ENCODE measurements at regions of chr16 and their contacts with region 1.

Region 1: GRCh38 chr16:87416826-87417527 is 24.8 kb downstream of the MAP1LC3B start:
- DNase-seq: peak; percentile 67
- H3K4me3 ChIP-seq: no peak overlapping the region
- H3K27ac ChIP-seq: no peak overlapping the region
- H3K4me1 ChIP-seq: no peaks in the 10 kb centered on the region
- H3K27me3 ChIP-seq: no peaks in the 10 kb centered on the region
- CTCF ChIP-seq: peak; percentile 60 to 77 (median 67)
- POLR2A ChIP-seq: no peak

Region 2: DNA sequence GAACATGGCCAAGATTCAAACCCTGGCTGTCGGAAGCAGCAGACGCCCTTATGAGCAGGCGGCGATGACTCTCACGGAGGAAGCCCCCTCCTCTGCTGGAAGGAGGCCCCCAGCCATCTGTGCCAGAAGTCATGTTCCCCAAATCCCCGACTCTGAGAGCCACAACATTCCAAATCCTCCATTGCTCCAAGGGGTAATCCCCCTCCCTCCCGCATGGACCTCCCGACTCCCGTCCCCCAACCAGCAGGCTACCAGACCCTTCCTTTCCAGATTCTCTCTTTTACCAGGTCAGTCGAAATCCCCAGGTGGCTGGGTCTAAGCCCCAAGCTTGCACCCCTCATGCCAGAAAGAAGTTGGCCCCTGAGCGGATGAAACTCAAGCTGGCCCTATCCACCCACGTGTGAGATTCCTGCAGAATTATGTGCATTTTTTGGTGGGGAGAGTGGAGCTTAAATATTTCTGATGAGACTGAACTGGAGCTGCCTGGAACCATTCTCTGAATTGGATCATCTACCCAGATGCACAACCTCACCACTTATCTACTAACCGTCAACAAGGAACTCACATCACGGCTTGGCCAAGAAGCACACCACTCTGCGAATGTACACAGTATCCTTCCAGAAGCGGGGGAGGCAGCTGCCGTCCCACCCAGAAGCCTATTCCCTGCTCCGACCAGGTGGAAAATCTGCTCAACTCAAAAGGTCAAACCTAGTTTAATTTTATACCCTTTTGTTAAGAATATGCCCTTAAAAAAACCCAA is 383.3 kb before region 1 on chr16:
- intact Hi-C with region 1: no loop called
- DNase-seq: no peak
- H3K4me3 ChIP-seq: no peak overlapping the region
- H3K27ac ChIP-seq: no peak overlapping the region
- H3K4me1 ChIP-seq: no peaks in the 10 kb centered on the region
- H3K27me3 ChIP-seq: no peaks in the 10 kb centered on the region
- CTCF ChIP-seq: no peak
- POLR2A ChIP-seq: no peak

Region 3: DNA sequence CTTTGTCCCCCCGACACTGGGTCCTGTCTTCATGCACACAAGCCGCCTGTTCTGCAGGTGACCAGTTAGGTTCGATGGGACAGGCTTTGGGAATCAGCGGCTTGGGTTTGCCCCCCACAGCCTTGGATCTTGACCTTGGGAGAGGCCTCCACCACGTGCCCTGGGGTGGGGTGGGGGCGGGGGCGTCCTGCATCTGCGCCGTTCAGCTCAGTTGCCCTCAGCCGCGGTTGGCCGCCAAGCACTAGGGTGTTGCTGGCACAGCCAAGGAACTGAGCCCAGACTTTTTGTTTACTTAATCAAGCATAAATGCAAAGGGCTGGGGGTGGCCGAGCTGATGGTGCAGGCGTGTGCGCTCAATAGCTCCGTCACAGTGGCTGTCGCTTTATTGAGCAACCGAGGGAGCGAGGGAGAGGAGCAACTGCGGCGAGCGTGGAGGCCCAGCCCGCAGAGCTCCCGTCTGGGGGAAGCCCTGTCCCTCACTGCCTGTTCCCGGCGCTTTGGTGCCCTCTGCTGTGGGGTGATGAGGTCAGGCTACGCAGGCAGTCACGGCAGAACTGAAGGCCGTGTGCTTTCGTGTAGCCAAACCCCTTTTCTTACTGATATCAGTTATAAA is 219.2 kb after region 1 on chr16:
- intact Hi-C with region 1: loop called (anchors 10 kb)
- DNase-seq: peak; percentile 85
- H3K4me3 ChIP-seq: no peak overlapping the region
- H3K27ac ChIP-seq: no peak overlapping the region
- H3K4me1 ChIP-seq: peaks cover 9% of the 10 kb centered on the region
- H3K27me3 ChIP-seq: no peaks in the 10 kb centered on the region
- CTCF ChIP-seq: peak; percentile 33 to 65 (median 53)
- POLR2A ChIP-seq: no peak

Region 4: DNA sequence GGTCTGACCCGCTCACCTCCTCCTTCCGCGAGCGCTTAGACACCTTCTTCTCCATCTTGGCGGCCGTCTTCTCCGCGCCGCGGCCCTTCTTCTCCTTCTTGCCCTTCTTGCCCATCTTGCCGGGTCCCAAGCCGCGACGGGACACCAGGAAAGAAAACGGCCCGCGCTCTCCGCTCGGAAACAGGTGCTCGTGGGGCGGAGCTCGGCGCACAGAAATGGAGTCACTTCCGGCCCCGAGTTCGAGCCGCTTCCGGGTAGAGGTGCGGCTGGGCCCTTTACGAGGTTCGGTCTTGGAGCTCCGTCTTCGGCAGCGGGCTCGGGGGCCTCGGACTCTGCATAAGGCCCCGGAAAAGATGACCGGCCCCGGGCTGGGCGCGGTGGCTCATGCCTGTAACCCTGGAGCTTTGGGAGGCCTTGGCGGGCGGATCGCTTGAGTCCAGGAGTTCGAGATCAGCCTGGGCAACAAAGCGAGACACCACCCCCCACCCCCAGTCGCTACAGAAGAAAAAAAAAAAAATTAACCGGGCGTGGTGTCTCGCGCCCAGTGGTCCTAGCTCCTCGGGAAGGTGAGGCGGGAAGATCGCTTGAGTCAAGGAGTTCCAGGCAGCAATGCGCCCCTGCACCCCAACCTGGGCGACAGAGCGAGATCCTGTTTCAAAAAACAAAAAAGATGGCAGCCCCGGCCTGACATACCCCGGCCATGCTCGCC is 349.0 kb after region 1 on chr16 and contains the start of gene KLHDC4:
- intact Hi-C with region 1: loop called (anchors 10 kb)
- DNase-seq: peak; percentile 95
- H3K4me3 ChIP-seq: peak within 1 kb of the TSS; percentile 81 to 86
- H3K27ac ChIP-seq: peak within 1 kb of the TSS; percentile 78 to 79
- H3K4me1 ChIP-seq: peaks cover 11% of the 10 kb centered on the region
- H3K27me3 ChIP-seq: no peaks in the 10 kb centered on the region
- CTCF ChIP-seq: no peak
- POLR2A ChIP-seq: peak; percentile 41
- total RNA-seq, gene KLHDC4: 79.2 to 130 TPM